Right ventricle myocardium superior (tissue), 1 donor: ENCODE measurements at regions of chr17 and their contacts with region 1.

Region 1: DNA sequence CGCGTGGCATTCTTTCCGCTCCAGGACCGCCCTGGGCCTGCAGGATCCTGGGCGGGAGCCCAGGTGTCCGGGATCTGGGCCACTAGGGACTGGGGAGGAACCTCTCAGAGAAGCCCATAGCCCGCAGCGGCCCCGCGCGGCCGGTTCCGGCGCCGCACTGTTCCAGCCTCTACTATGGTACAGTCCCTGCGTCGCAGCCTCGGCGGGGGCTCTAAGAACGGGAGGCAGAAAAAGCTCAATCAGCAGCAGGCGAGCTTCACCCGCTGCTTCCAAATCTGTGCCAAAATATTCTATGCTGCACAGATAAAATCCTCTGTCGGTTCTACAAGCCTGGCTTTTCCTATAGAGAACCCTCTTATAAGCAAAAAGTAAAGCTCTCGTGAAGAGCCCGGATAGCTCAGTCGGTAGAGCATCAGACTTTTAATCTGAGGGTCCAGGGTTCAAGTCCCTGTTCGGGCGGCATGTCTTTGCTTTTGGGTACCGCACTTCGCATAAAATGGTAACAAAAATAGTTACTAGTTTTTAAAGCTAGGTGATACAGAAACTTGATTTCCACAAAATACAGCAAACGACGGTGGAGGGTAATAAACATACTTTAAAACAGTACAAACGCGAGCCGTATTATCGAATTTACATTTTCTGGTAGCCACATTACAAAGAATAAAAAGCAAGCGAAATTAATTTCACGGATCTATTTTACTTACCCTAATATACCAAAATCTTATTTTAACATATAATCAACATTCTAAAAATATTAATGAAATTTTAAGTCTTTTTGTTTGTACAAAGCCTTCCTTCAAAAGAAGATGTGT is 661 bp upstream of the ALOXE3 start:
- DNase-seq: peak; percentile 95
- ATAC-seq: peak; percentile 85

Region 2: DNA sequence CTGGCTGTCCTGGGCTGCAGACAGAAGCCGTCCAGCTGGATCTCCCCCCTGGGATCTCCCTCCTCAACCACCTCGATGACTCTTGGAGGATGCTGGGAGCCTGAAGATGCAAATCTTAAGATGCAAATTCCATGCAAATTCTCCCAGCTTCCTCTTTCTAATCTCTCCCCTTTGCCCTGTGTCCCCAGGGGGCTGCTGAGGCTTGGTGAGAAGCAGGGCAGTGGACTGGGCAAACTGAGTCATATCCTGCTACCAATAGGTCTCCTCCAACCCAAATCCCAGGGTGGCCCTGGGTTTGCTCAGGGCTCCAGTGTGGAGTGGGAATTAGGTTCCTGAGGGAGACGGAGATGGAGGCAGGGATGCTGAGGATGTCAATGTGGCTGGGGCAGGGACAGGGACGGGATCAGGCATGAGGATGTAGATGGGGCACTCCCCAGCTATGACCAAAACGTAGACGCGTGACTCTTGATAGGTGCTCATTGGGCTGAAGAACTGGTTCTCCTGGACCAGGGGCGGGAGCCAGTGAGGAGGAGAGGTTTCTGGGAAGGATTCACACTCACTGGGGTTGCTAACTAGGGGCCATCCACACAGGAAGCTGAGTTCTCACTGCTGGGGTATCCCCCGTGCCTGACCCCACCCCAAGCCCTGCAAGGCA is 27.8 kb before region 1 on chr17:
- intact Hi-C with region 1: no loop called
- DNase-seq: no peak
- ATAC-seq: no peak

Region 3: GRCh38 chr17:8162233-8162996 is 43.4 kb after region 1 on chr17 and contains the start of gene VAMP2:
- intact Hi-C with region 1: loop called (anchors 5 kb)
- DNase-seq: peak; percentile 92
- ATAC-seq: peak; percentile 62
- total RNA-seq, gene VAMP2: 54.8 TPM

Region 4: GRCh38 chr17:8186787-8187516 is 68.0 kb after region 1 on chr17:
- intact Hi-C with region 1: loop called (anchors 2 kb)
- DNase-seq: peak; percentile 94
- ATAC-seq: peak; percentile 70

Region 5: DNA sequence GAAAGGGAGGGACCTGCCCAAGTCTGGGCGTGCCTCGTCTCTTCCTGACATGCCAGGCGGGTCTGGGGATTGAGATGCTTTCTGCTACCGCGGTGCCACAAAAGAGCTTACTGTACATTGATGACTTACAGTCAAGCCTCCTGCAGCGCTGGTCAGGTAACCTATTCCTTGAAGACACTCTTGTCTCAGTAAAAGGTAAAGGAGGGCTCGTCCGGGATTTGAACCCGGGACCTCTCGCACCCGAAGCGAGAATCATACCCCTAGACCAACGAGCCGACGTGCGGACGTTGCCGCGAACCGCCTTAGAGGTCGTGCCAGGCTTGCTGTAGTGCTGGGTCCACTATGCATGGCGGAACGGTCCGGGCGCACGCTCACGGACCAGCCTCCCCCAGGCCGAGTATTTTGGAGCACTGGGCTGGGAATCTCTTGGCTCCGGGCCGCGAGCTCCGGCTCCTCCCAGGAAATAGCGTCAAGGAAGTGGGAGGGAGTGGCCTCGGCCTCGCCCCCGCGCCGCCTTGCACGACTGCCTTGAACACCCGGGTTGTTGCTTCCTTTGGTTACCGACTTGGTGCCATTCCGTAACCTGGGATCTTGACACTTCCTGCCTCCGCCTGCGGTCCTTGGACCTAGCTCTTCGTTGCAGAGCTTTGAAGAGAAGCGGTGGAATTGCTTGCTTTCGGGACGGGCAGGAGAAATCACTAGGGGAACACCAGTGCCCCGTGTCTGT is 103.8 kb after region 1 on chr17:
- intact Hi-C with region 1: loop called (anchors 1 kb)
- DNase-seq: peak; percentile 96
- ATAC-seq: peak; percentile 67

Region 6: DNA sequence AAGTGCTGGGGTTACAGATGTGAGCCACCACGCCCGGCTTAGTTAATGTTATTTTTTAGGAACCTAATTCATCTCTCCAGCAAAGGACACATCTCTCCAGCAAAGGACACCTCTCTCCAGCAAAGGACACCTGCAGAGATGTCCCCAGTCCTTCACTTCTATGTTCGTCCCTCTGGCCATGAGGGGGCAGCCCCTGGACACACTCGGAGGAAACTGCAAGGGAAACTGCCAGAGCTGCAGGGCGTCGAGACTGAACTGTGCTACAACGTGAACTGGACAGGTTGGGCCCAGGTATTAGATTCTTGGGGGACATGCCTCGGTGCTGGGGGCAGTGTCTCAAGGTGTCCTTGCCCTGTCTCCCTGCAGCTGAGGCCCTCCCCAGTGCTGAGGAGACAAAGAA is 134.8 kb after region 1 on chr17:
- intact Hi-C with region 1: no loop called
- DNase-seq: no peak
- ATAC-seq: no peak

Region 7: DNA sequence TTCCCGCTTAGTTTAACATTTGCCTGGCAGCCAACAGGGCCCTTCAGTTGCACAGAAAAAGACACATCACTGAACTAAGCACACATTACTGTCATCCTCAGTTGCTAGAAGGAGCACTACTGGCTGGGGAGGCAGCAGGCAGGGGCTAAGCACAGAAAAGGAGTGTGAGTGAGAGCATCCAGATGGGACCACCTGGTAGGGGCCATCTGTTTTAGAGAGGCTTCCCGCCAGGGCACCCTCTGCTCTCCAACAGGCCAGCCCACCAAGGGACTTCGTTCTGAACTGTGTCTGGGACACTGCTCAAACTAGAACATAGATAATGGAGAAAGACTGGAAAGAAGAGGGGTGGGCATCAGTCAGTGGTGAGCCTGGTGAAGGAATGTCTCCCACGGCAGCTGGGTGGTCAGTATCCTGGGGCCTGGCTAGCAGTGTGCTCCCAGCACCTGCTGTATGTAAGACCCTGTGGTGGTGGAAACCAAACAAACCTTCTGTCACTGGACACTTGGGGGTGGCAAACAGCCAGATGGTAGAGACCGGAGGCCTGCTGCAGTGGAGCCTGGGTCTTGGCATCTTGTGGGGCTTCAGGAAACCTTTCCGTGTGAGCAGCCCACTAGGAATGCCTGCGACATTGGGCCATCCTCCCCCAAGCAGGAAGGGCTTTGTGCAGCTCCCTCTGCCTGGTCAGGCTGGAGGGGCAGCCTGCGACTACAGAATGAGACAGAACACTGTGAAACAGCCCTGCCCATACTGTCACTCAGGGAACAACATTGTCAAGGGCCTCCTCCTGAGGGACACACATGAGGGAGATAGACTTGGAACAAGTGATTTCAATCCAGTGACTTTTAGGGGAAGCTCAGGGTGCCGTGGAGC is 156.7 kb after region 1 on chr17:
- intact Hi-C with region 1: no loop called
- DNase-seq: no peak
- ATAC-seq: no peak